ENCODE measurements at regions of chr2 and their contacts with region 1.

Region 1: DNA sequence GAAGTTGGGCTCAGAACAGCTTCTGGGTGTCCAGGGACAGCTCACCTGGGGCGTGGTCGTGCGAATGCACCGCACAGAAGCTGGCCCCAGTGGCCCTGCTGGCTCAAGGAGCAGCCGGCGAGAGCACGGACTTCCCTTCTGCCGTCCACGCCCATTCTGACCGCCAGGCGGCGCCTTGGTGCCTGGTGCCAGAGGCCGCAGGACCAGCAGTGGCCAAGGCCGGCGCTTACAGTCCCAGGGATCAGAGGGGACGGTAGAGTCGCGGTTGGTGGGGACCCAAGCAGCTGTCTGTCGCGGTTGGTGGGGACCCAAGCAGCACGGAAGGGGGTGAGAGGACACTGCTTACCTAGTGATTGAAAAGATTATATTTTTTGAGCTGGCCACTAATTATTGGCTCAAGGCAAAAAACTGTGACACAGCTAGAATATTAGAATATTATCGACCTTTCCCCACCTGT is 25.7 kb downstream of the NPPC start:
- DNase-seq: peak; percentile 36
- H3K4me3 ChIP-seq: no peak overlapping the region
- H3K27ac ChIP-seq: no peak overlapping the region
- H3K4me1 ChIP-seq: no peaks in the 10 kb centered on the region
- H3K27me3 ChIP-seq: no peaks in the 10 kb centered on the region
- CTCF ChIP-seq: peak; percentile 57 to 69

Region 2: DNA sequence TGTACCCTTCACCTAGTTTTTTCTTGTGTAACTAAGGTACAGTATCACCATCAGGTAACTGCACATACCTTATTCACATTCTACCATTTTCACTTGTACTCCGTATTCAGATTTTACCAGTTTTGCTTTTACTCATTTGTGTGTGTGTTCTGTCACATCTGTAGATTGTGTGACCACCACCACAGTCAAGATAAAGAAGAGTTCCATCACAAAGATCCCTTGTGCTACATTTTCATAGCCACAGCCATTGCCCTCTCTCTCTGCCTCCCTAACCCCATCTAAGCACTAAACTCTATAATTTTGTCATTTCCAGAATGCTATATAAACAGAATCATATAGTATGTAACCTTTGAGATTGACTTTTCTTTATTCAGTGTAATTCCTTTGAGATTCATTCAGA is 84.5 kb after region 1 on chr2:
- CTCF ChIA-PET with region 1: no interaction called
- dilution Hi-C with region 1: loop called (anchors 5 kb)
- in situ Hi-C with region 1: no loop called
- intact Hi-C with region 1: no loop called
- DNase-seq: no peak
- H3K4me3 ChIP-seq: no peak overlapping the region
- H3K27ac ChIP-seq: no peak overlapping the region
- H3K4me1 ChIP-seq: peaks cover 6% of the 10 kb centered on the region
- H3K27me3 ChIP-seq: no peaks in the 10 kb centered on the region
- CTCF ChIP-seq: no peak

Region 3: GRCh38 chr2:232142049-232142448 is 241.5 kb after region 1 on chr2:
- CTCF ChIA-PET with region 1: no interaction called
- dilution Hi-C with region 1: no loop called
- in situ Hi-C with region 1: loop called in 1 of 2 experiments (anchors 10 kb)
- intact Hi-C with region 1: no loop called
- DNase-seq: peak; percentile 14
- H3K4me3 ChIP-seq: no peak overlapping the region
- H3K27ac ChIP-seq: no peak overlapping the region
- H3K4me1 ChIP-seq: no peaks in the 10 kb centered on the region
- H3K27me3 ChIP-seq: no peaks in the 10 kb centered on the region
- CTCF ChIP-seq: peak; percentile 50 to 74

Region 4: DNA sequence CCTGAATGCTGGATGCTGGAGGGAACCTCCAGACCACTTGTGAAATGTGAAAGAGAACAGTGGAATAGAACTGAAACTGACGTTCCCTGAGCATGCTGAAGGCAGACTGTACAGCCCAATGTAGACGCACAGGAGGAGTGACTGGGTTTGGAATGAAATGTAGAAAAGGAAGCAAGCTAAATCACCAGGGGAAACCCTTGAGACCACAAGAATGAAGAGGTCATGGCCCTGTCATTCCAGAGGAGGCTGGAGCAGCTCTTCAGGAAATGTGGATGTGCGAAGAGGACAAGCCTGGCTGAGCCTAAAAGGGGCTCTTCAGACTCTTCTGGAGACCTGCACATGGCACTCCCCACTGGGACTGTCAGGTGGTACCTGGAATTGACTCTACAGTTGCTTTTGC is 359.6 kb after region 1 on chr2:
- CTCF ChIA-PET with region 1: interaction called, 12 read pairs
- dilution Hi-C with region 1: no loop called
- in situ Hi-C with region 1: no loop called
- intact Hi-C with region 1: no loop called
- DNase-seq: peak; percentile 81
- H3K4me3 ChIP-seq: no peak overlapping the region
- H3K27ac ChIP-seq: no peak overlapping the region
- H3K4me1 ChIP-seq: peaks cover 15% of the 10 kb centered on the region
- H3K27me3 ChIP-seq: no peaks in the 10 kb centered on the region
- CTCF ChIP-seq: no peak

Region 5: DNA sequence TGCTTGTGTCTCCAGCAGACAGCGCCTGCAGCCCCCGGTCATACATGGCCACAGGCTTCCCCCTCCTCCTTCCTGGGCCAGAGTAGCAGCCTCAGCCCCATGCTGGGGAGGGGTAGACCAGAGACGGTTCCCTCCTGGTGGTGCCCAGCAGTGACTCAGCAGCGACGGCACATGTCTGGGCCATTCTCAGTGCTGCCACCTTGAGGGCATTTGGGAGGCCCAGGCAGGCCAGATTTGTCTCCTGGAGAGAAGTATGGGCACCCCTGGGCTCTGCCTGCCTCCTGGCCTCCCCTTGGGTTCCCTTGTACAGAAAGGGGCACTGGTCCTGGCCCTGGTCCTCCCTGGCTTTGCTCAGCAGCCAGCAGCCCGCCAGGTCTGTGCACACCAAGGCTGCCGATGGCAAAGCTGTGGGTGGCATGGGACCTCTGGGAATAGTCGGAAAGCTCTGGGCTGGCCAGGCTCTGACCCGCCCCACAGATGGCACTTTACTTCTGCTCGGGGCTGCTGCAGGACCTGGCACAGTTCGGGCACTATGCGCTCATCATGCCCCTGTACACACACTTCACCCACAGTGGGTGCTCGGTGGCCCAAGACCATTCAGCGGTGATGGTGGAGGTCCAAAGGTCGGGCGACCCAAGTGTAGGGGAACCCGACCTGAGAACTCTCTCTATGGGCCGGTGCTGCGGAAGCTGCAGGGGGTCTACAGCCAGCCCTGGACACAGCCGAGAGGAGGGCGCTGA is 544.1 kb after region 1 on chr2:
- CTCF ChIA-PET with region 1: no interaction called
- dilution Hi-C with region 1: no loop called
- in situ Hi-C with region 1: loop called (anchors 5 to 10 kb)
- intact Hi-C with region 1: no loop called
- DNase-seq: peak; percentile 54
- H3K4me3 ChIP-seq: no peak overlapping the region
- H3K27ac ChIP-seq: no peak overlapping the region
- H3K4me1 ChIP-seq: no peaks in the 10 kb centered on the region
- H3K27me3 ChIP-seq: no peaks in the 10 kb centered on the region
- CTCF ChIP-seq: peak; percentile 75 to 80